Thyroid gland (tissue), 4 donors: ENCODE measurements at regions of chr15 and their contacts with region 1.

Region 1: DNA sequence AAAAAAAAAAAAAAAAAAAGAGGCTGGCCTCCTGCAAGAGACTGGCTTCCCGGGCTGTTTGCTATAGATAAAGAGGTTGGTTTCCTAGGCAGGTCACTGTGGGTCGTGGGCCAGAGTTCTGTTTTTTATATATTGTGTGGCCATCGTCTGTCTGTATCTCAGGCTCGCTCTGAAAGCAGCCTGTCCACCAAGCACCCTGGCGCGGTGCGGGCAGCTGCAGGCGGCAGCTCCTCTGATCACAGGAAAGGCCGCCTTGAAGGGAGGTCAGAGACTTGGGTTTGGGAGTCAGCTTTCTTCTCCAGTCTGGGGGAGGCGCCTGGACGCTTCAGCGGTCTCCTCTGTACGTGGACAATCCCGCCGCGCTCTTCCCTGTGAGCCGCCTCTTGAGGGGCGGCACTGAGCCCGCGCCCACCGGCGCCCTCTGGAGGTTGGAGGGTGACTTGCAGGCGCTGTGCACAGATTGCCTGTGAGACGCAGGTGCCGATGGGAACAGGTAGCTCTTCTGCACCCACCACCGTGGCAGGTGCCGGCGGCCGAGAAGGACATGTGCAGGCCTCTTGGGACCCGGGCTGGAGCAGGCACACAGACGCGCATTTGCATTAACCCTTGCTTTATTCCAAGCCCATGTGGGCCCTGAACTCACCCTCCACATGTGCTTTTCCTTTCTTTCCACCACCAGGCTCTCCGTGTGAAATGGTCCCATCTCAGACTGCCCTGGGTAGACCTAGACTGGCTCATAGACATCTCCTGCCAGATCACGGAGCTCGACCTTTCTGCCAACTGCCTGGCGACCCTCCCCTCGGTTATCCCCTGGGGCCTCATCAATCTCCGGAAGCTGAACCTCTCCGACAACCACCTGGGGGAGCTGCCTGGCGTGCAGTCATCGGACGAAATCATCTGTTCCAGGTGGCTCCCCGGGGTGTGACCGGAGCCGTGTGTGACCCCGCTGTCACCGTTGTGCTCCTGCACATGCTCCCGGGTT is 89.3 kb downstream of the LRRK1 start:
- DNase-seq: peak; percentile 87 to 91
- H3K4me3 ChIP-seq: peak overlapping the region in 2 of 3 donors; percentile 5 to 31
- H3K27ac ChIP-seq: no peak overlapping the region
- H3K4me1 ChIP-seq: peaks cover 0 to 14% of the 10 kb centered on the region in 2 donors
- H3K27me3 ChIP-seq: no peaks in the 10 kb centered on the region
- CTCF ChIP-seq: peak; percentile 91 to 100 (median 96)
- POLR2A ChIP-seq: peak in 1 of 2 donors; percentile 30

Region 2: GRCh38 chr15:100633763-100634075 is 374.7 kb before region 1 on chr15:
- intact Hi-C with region 1: loop called (anchors 5 kb)
- DNase-seq: peak; percentile 11 to 20
- H3K4me3 ChIP-seq: no peak overlapping the region
- H3K27ac ChIP-seq: no peak overlapping the region
- H3K4me1 ChIP-seq: peaks cover 0 to 14% of the 10 kb centered on the region in 2 donors
- H3K27me3 ChIP-seq: no peaks in the 10 kb centered on the region
- CTCF ChIP-seq: no peak
- POLR2A ChIP-seq: no peak